AG04449 (cell line): ENCODE measurements at regions of chr7 and their contacts with region 1.

Region 1: DNA sequence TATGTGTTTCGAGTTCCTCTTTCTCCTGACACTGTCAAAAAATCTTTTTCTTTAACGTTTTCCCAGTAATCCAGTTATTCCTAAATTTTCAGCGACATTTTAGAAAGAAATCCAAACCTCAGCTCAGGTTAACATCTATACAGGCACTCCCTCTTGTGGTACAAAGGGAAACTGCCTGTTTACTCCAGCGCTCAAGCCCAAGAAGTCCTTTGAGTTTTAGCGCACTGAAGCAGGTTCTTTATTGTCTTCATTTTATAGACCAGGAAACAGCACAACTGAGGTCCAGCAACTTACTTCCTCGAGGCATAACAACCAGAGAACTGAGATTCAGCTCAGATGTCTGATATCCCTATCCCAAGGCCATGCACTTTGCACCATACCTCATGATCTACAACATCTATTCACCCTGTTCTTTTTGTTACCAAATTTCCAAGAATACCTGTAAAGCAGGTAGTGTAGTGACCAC is 287.2 kb upstream of the MKLN1 start:
- DNase-seq: no peak
- H3K4me3 ChIP-seq: no peak overlapping the region
- CTCF ChIP-seq: peak; percentile 75

Region 2: GRCh38 chr7:130904031-130904757 is 136.3 kb before region 1 on chr7:
- CTCF ChIA-PET with region 1: interaction called, 32 read pairs
- POLR2A ChIA-PET with region 1: interaction called, 3 read pairs
- DNase-seq: peak; percentile 91
- H3K4me3 ChIP-seq: peak overlapping the region; percentile 36
- CTCF ChIP-seq: no peak

Region 3: GRCh38 chr7:130941322-130942210 is 98.9 kb before region 1 on chr7:
- CTCF ChIA-PET with region 1: interaction called, 13 read pairs
- POLR2A ChIA-PET with region 1: no interaction called
- DNase-seq: no peak
- H3K4me3 ChIP-seq: peak overlapping the region; percentile 43
- CTCF ChIP-seq: no peak

Region 4: DNA sequence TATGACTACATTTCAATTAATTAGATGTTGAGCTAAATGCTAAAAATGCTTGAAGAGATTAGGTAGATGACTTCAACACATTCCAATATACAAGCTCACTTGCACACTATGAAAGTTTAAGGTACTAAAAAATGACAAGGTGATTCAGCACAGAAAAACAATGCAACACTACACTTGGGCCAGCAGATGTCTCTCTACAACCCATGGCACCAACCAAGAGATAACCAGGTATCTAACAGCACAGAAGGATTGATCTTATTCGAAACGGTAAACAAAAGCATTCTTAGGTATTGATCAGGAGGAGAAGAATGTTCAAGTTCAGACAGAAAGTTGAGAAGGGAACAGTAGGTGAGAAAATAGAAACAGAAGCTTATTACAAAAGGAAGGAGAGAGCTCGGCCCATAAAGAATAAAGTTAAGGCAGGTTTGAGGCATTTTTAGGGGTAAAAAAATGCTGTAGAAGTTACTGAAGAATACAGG is 58.3 kb before region 1 on chr7:
- CTCF ChIA-PET with region 1: interaction called, 122 read pairs
- POLR2A ChIA-PET with region 1: no interaction called
- DNase-seq: no peak
- H3K4me3 ChIP-seq: no peak overlapping the region
- CTCF ChIP-seq: peak; percentile 63

Region 5: GRCh38 chr7:131027287-131027773 is 13.2 kb before region 1 on chr7:
- CTCF ChIA-PET with region 1: interaction called, 17 read pairs
- POLR2A ChIA-PET with region 1: no interaction called
- DNase-seq: peak; percentile 72
- H3K4me3 ChIP-seq: no peak overlapping the region
- CTCF ChIP-seq: no peak